Activated T-helper 2 cell treated with anti-CD3 and anti-CD28 coated beads, Interferon-gamma antibody, Interleukin-2, Interleukin-4, amounts not matched to agents 10 μg/mL and 5 μg/mL and 100 μg/mL, durations not matched to agents 14 hours and 24 hours and 36 hours (primary cell): ENCODE measurements at regions of chr4 and their contacts with region 1.

Region 1: DNA sequence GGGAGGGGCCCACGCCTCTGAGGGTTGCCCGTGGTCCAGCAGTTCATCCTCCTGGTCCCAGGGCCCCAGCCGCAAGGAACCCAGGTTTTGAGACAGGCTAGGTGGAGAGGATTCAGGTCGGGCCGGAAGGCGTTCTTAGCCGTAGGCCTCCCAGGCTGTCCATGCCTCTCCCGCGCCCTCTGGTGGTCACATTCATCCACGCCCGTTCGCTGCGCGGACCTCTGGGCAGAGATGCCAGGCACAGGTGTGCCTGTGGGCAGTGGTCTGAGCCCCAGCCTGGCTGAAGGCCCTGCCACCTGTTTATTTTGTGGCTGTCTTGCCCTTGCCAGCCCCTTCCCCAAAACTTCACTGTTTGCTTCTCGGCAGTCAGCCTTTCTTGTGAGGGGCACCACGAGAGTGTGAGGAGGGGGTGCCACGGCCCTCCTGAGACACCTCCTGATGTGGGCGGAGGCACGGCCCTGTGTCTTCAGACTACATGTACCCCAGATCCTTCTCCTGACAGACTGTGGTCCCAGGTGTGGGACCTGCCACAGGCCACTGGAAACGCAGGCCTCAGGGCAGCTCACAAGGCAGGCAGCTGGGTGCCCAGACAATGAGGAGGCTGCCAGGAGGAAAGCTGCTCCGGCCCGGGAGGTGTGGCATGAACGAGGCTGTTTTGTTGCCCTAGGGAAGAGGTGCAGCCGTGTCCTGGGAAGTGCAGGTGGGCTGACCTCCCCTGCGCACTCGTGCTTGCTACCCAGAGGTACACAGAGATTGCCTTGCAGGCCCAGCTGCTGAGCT is 5.0 kb downstream of the UVSSA start:
- DNase-seq: peak; percentile 83
- H3K4me3 Mint-ChIP-seq: no peak overlapping the region
- H3K27ac Mint-ChIP-seq: peak overlapping the region; percentile 60
- H3K4me1 Mint-ChIP-seq: peaks cover 19% of the 10 kb centered on the region
- H3K27me3 Mint-ChIP-seq: no peaks in the 10 kb centered on the region

Region 2: DNA sequence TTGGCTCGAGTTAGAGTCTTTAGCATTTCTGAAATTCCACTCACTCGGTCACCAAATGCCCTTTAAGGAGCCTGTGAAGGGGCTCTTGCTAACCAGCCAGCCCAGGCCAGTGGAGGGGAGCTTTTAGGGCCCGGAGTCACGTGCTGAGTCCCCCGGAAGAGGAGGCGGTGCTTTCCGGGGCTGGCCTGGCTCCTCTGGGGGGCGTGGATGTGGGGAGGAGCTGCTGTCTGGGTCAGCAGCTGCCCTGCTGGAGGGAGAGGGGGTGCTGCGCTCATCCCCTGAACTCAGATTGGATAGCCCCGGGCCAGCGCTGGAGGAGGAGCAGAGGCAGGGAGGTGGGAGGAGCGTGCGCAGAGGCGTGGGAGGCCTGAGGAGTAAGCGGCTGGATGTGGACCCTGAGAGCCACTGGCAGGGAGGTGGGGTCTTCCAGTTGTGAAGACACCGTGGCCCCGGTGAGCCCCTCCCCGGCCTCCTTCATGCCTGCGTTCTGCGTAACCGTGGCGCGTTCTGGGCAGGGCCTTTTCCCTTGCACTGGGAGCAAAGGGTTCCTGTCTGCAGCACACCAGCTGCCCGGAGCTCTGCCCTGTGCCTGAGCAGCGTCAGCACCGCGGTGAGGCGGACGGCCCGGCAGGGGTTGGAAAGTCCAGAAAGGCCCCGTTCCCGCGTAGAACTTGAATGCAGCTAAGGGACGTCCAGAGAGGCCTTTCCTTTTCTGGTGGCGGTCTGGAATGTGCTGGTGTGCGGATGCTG is 42.6 kb before region 1 on chr4:
- intact Hi-C with region 1: loop called (anchors 1 kb)
- DNase-seq: peak; percentile 36
- H3K4me3 Mint-ChIP-seq: peak overlapping the region; percentile 52
- H3K27ac Mint-ChIP-seq: peak overlapping the region; percentile 26
- H3K4me1 Mint-ChIP-seq: peaks cover 34% of the 10 kb centered on the region
- H3K27me3 Mint-ChIP-seq: no peaks in the 10 kb centered on the region